ENCODE measurements at regions of chr6 and their contacts with region 1.

Region 1: GRCh38 chr6:33299237-33299944 is 649 bp upstream of the RGL2 start:
- DNase-seq: peak; percentile 94
- H3K4me3 Mint-ChIP-seq: peak overlapping the region; percentile 95
- H3K27ac Mint-ChIP-seq: peak overlapping the region; percentile 100
- H3K4me1 Mint-ChIP-seq: peaks cover 41% of the 10 kb centered on the region
- H3K27me3 Mint-ChIP-seq: no peaks in the 10 kb centered on the region

Region 2: GRCh38 chr6:33288921-33289748 is 10.3 kb before region 1 on chr6 and contains the starts of genes PFDN6 and WDR46:
- CTCF ChIA-PET with region 1: interaction called, 29 read pairs
- POLR2A ChIA-PET with region 1: interaction called, 41 read pairs
- DNase-seq: peak; percentile 87
- H3K4me3 Mint-ChIP-seq: peak within 1 kb of the TSS; percentile 90
- H3K27ac Mint-ChIP-seq: peak within 1 kb of the TSS; percentile 80
- H3K4me1 Mint-ChIP-seq: peaks cover 47% of the 10 kb centered on the region
- H3K27me3 Mint-ChIP-seq: no peaks in the 10 kb centered on the region
- total RNA-seq, gene PFDN6: 63.5 to 65.0 TPM
- total RNA-seq, gene WDR46: 37.5 to 41.7 TPM

Region 3: GRCh38 chr6:33344701-33345697 is 45.6 kb after region 1 on chr6:
- CTCF ChIA-PET with region 1: interaction called, 7 read pairs
- POLR2A ChIA-PET with region 1: interaction called, 33 read pairs
- DNase-seq: peak; percentile 79
- H3K4me3 Mint-ChIP-seq: peak overlapping the region; percentile 76
- H3K27ac Mint-ChIP-seq: peak overlapping the region; percentile 97
- H3K4me1 Mint-ChIP-seq: peaks cover 46% of the 10 kb centered on the region
- H3K27me3 Mint-ChIP-seq: peaks cover 2% of the 10 kb centered on the region

Region 4: DNA sequence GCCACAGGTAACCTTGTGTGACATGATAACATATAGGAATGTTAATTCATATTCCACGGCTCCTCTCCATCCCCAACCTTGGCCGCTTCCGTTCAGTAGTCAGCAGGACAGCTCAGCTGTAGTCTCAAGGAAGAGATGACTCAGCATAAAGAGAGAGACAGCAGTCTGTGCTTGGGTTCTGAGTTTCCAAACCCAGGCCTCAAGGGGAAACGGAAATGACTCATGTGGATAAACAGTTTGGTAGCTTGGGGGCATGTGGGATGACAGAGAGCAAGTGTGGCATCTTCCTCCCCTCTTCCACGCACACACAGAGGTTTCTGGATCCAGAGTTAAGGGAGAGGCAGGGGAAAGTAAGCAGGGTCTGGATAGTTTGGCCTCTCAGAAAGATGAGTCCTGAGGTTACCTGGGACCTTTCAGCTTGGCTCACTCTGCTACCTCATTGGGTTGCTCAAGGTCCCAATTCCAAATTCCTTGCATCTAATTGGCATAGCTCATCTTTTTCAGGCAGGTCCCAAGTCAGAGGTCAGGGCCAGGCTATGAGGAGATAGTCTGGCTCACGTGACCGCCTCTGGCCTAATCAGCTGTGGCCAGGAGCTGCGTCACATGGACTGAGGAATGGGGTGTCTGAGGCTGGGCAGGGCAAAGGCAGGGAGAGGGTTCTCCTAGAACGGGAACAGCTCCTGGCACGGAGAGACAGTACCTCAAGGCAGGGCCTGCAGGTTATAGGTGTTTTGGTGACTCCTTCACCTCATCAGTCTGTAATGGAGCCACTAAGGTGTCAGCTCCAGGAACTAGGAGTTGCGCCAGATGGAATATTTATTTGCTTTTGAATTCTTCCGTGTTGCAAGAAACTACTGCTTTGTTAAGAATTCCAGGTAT is 540.9 kb after region 1 on chr6:
- CTCF ChIA-PET with region 1: no interaction called
- POLR2A ChIA-PET with region 1: no interaction called
- DNase-seq: peak; percentile 68
- H3K4me3 Mint-ChIP-seq: no peak overlapping the region
- H3K27ac Mint-ChIP-seq: peak overlapping the region; percentile 32
- H3K4me1 Mint-ChIP-seq: peaks cover 24% of the 10 kb centered on the region
- H3K27me3 Mint-ChIP-seq: peaks cover 20% of the 10 kb centered on the region

Measured in activated CD4-positive, alpha-beta memory T cell treated with anti-CD3 and anti-CD28 coated beads, Interleukin-2, amount 10 ng/mL, durations not matched to agents 7 days and 5 days (primary cell).